ENCODE measurements at regions of chr3 and their contacts with region 1.

Region 1: GRCh38 chr3:110773413-110773954 is 298.1 kb upstream of the NECTIN3 start:
- DNase-seq: peak; percentile 99
- ATAC-seq: peak; percentile 100
- H3K4me3 ChIP-seq: peak overlapping the region in 1 of 3 experiments; percentile 23; a peak in 1 of 6 replicates
- H3K27ac ChIP-seq: peak overlapping the region; percentile 90
- H3K4me1 ChIP-seq: peaks cover 45% of the 10 kb centered on the region
- H3K27me3 ChIP-seq: no peaks in the 10 kb centered on the region
- CTCF ChIP-seq: no peak
- EP300 ChIP-seq: peak; percentile 98
- POLR2A ChIP-seq: no peak
- RAD21 ChIP-seq: no peak

Region 2: GRCh38 chr3:110285027-110285426 is 488.5 kb before region 1 on chr3:
- CTCF ChIA-PET with region 1: no interaction called
- POLR2A ChIA-PET with region 1: no interaction called
- in situ Hi-C with region 1: no loop called
- intact Hi-C with region 1: no loop called
- DNase-seq: no peak
- ATAC-seq: no peak
- H3K4me3 ChIP-seq: no peak overlapping the region
- H3K27ac ChIP-seq: no peak overlapping the region
- H3K4me1 ChIP-seq: no peaks in the 10 kb centered on the region
- H3K27me3 ChIP-seq: no peaks in the 10 kb centered on the region
- CTCF ChIP-seq: no peak
- EP300 ChIP-seq: no peak
- POLR2A ChIP-seq: no peak
- RAD21 ChIP-seq: no peak

Region 3: DNA sequence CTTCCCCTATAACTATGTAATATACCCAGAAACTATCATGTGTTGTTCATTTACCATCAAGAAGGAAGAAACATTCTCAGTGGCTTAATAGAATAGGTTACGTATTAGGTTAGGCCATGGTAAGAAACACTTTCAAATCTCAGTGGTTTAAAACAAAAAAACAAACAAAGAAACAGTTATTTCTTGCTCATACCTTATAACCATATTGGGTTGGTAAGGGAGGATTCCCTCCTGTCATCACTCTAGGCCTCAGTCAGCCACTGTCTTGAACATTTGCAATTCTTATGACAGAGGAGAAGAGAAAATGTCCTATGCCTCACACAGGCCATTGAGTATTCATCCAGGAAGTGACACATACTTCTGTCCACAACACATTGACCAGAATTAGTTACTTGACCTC is 429.5 kb before region 1 on chr3:
- CTCF ChIA-PET with region 1: no interaction called
- POLR2A ChIA-PET with region 1: interaction called, 6 read pairs
- in situ Hi-C with region 1: no loop called
- intact Hi-C with region 1: loop called (anchors 10 kb)
- DNase-seq: peak; percentile 19
- ATAC-seq: peak; percentile 39
- H3K4me3 ChIP-seq: no peak overlapping the region
- H3K27ac ChIP-seq: peak overlapping the region; percentile 51
- H3K4me1 ChIP-seq: peaks cover 42% of the 10 kb centered on the region
- H3K27me3 ChIP-seq: no peaks in the 10 kb centered on the region
- CTCF ChIP-seq: no peak
- EP300 ChIP-seq: no peak; a peak in 1 of 4 replicates
- POLR2A ChIP-seq: no peak
- RAD21 ChIP-seq: no peak

Region 4: GRCh38 chr3:110384601-110385000 is 388.9 kb before region 1 on chr3:
- CTCF ChIA-PET with region 1: no interaction called
- POLR2A ChIA-PET with region 1: no interaction called
- in situ Hi-C with region 1: no loop called
- intact Hi-C with region 1: no loop called
- DNase-seq: no peak
- ATAC-seq: no peak
- H3K4me3 ChIP-seq: no peak overlapping the region
- H3K27ac ChIP-seq: no peak overlapping the region
- H3K4me1 ChIP-seq: no peaks in the 10 kb centered on the region
- H3K27me3 ChIP-seq: no peaks in the 10 kb centered on the region
- CTCF ChIP-seq: no peak
- EP300 ChIP-seq: no peak
- POLR2A ChIP-seq: no peak
- RAD21 ChIP-seq: no peak

Region 5: GRCh38 chr3:110397115-110397514 is 376.4 kb before region 1 on chr3:
- CTCF ChIA-PET with region 1: no interaction called
- POLR2A ChIA-PET with region 1: no interaction called
- in situ Hi-C with region 1: no loop called
- intact Hi-C with region 1: loop called (anchors 5 kb)
- DNase-seq: peak; percentile 97
- ATAC-seq: peak; percentile 97
- H3K4me3 ChIP-seq: no peak overlapping the region
- H3K27ac ChIP-seq: peak overlapping the region; percentile 73
- H3K4me1 ChIP-seq: peaks cover 31% of the 10 kb centered on the region
- H3K27me3 ChIP-seq: no peaks in the 10 kb centered on the region
- CTCF ChIP-seq: no peak
- EP300 ChIP-seq: peak in 1 of 2 experiments; percentile 94; a peak in 2 of 4 replicates
- POLR2A ChIP-seq: no peak
- RAD21 ChIP-seq: no peak

Region 6: DNA sequence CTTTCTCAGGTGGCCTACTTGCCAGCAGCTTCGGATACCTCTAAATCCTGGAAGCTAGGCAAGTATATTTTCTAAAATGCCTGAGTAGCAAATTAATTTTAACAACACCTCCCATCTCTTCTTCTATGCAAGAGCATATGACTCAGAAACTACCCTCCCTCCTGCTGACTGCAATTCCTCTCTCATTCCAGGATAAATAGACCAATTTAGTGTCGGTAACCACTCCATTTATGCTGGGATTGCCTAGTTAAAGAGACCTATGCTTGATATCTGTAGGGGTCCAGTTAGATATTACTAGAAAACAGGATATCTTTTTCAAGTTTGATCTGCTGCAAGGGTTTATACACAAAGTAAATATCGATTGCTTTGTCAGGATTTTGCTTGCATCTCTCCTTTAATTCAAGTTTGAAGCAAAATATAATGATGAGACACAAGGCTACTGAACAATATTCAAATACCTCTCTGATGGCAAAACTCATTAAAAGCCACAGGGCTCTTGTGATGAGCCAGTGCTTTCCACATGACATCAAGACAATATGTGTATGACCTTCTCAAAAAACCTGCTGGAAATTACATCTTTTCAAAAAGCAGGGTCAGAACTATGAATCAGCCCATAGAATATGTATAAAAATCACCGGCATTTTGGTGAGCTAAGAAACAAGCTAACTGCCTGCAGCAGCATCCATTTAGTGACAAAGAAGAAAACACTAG is 193.5 kb before region 1 on chr3:
- CTCF ChIA-PET with region 1: no interaction called
- POLR2A ChIA-PET with region 1: no interaction called
- in situ Hi-C with region 1: no loop called
- intact Hi-C with region 1: no loop called
- DNase-seq: no peak
- ATAC-seq: no peak
- H3K4me3 ChIP-seq: no peak overlapping the region
- H3K27ac ChIP-seq: no peak overlapping the region
- H3K4me1 ChIP-seq: 0 out of 2 replicates have a peak, but pooled peaks cover 6% of the 10 kb centered on the region
- H3K27me3 ChIP-seq: no peaks in the 10 kb centered on the region; a peak in 1 of 5 replicates
- CTCF ChIP-seq: no peak
- EP300 ChIP-seq: no peak
- POLR2A ChIP-seq: no peak
- RAD21 ChIP-seq: no peak

Region 7: DNA sequence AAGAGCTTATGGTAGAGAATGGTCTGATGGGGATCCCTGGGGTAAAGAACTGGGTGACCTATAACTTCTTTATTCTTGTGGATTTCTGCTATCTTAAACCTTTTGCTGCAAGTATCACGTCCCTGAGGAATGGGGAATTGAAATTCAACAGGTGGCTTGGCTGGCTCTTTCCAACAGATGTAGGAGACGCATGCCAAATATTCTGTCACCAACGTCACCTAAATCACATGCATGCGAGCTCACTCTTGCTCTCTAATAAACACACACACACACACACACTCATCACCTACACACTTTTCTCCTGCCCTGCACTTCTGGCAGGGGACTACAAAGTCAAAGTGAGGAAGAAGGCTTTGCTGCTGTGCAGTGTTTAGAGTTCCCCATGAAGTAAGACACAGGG is 152.3 kb after region 1 on chr3:
- CTCF ChIA-PET with region 1: no interaction called
- POLR2A ChIA-PET with region 1: no interaction called
- in situ Hi-C with region 1: loop called (anchors 10 kb)
- intact Hi-C with region 1: no loop called
- DNase-seq: no peak
- ATAC-seq: no peak
- H3K4me3 ChIP-seq: no peak overlapping the region
- H3K27ac ChIP-seq: no peak overlapping the region
- H3K4me1 ChIP-seq: peaks cover 30% of the 10 kb centered on the region
- H3K27me3 ChIP-seq: no peaks in the 10 kb centered on the region
- CTCF ChIP-seq: no peak
- EP300 ChIP-seq: no peak
- POLR2A ChIP-seq: no peak
- RAD21 ChIP-seq: no peak

Region 8: GRCh38 chr3:110940055-110940454 is 166.6 kb after region 1 on chr3:
- CTCF ChIA-PET with region 1: no interaction called
- POLR2A ChIA-PET with region 1: interaction called, 6 read pairs
- in situ Hi-C with region 1: no loop called
- intact Hi-C with region 1: loop called (anchors 1 kb)
- DNase-seq: peak; percentile 87
- ATAC-seq: peak; percentile 93
- H3K4me3 ChIP-seq: no peak overlapping the region; a peak in 1 of 6 replicates
- H3K27ac ChIP-seq: peak overlapping the region; percentile 67
- H3K4me1 ChIP-seq: peaks cover 53% of the 10 kb centered on the region
- H3K27me3 ChIP-seq: no peaks in the 10 kb centered on the region
- CTCF ChIP-seq: no peak
- EP300 ChIP-seq: peak in 1 of 2 experiments; percentile 82; a peak in 2 of 4 replicates
- POLR2A ChIP-seq: no peak
- RAD21 ChIP-seq: no peak

Region 9: DNA sequence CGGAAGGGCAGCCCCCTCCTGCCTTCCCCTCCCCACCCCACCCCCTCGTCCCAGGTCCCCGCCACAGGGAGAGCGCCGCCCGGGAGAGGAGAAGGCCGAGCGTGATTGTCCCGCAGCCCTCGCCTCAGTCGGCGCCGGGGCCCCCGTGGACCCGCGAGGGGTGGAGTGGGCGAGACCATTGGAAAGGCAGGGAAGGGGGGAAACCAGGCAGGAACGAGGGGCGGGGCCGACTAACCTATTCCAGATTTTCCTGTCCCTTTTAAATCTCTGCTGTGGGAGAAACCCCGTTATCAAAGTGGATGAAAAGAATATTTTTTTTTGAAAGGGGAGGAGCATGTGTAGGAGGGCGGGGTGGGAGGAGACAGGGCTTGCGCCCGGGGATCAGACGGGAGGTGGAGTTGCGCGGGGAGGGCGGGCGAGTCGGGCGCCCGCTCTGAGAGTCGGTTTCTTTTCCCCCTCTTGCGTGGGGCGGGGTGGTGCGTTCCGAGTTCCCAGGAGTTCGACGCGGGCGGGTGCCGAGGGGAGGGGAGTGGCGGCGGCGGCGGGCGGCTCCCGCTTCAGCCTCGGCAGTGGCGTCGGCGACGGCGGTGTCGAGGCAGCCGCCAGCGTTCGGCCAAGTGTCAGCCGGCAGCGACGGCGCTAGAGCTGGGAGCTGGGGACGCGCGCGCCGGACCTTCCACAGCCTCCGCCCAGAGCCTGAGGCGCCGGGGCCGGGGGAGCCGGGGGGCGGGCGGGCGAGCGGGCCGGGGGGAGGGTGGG is 298.0 kb after region 1 on chr3 and contains the start of gene NECTIN3:
- CTCF ChIA-PET with region 1: no interaction called
- POLR2A ChIA-PET with region 1: interaction called, 7 read pairs
- in situ Hi-C with region 1: no loop called
- intact Hi-C with region 1: loop called (anchors 1 kb)
- DNase-seq: peak; percentile 90
- ATAC-seq: peak; percentile 77
- H3K4me3 ChIP-seq: peak within 1 kb of the TSS; percentile 96 to 97 (median 96)
- H3K27ac ChIP-seq: peak within 1 kb of the TSS; percentile 89
- H3K4me1 ChIP-seq: peaks cover 58% of the 10 kb centered on the region
- H3K27me3 ChIP-seq: no peaks in the 10 kb centered on the region; a peak in 1 of 5 replicates
- CTCF ChIP-seq: no peak; the same call in 1 of the 2 replicates
- EP300 ChIP-seq: no peak
- POLR2A ChIP-seq: peak; percentile 8 to 50; a peak in 2 of 4 replicates
- RAD21 ChIP-seq: no peak
- total RNA-seq, gene NECTIN3: 28.7 and 45.1 TPM in 2 replicates